Activated CD4-positive, alpha-beta T cell treated with anti-CD3 and anti-CD28 coated beads for 36 hours (primary cell): ENCODE measurements at regions of chr14 and their contacts with region 1.

Region 1: DNA sequence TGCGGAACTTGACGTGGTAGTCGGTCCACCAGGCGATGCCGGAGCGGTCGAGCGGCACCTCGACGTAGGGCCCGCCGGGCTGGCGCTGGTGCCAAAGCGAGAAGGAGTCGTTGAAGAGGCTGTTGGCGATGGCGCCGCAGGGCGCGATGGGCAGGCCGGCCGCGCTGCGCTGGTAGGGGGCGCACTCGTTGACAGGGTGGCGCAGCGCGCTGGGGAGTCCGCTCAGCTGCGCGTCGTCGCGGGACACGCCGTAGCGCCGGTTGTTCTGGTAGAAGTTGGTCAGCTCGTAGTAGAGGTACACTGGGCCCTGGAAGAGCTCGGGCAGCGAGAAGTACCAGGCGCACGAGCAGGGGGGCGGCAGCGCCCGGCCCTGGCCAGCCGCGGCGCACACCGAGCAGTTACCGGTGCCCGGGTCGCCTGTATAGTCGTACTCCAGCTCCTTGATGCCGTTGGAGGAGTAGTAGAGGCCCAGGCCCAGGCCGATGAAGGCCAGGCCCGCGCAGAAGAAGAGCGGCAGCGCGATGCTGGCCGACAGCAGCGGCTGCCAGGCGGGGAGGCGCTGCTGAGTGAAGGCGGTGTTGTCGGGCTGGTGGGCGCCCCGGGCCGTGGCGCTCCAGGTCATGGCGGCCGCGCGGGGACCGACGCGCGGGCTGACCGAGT is 482 bp downstream of the TMEM30B start:
- DNase-seq: peak; percentile 88
- ATAC-seq: peak; percentile 90
- H3K4me3 Mint-ChIP-seq: peak overlapping the region; percentile 82
- H3K27ac Mint-ChIP-seq: peak overlapping the region; percentile 87
- H3K4me1 Mint-ChIP-seq: peaks cover 28% of the 10 kb centered on the region
- H3K27me3 Mint-ChIP-seq: peaks cover 8% of the 10 kb centered on the region

Region 2: GRCh38 chr14:60867503-60868172 is 413.0 kb before region 1 on chr14:
- CTCF ChIA-PET with region 1: no interaction called
- POLR2A ChIA-PET with region 1: no interaction called
- intact Hi-C with region 1: no loop called
- DNase-seq: no peak
- ATAC-seq: peak; percentile 95
- H3K4me3 Mint-ChIP-seq: no peak overlapping the region
- H3K27ac Mint-ChIP-seq: no peak overlapping the region
- H3K4me1 Mint-ChIP-seq: peaks cover 11% of the 10 kb centered on the region
- H3K27me3 Mint-ChIP-seq: no peaks in the 10 kb centered on the region

Region 3: GRCh38 chr14:61246721-61247120 is 33.9 kb before region 1 on chr14:
- CTCF ChIA-PET with region 1: no interaction called
- POLR2A ChIA-PET with region 1: no interaction called
- intact Hi-C with region 1: no loop called
- DNase-seq: no peak
- ATAC-seq: no peak
- H3K4me3 Mint-ChIP-seq: no peak overlapping the region
- H3K27ac Mint-ChIP-seq: no peak overlapping the region
- H3K4me1 Mint-ChIP-seq: peaks cover 2% of the 10 kb centered on the region
- H3K27me3 Mint-ChIP-seq: peaks cover 13% of the 10 kb centered on the region

Region 4: GRCh38 chr14:61262082-61262481 is 18.6 kb before region 1 on chr14:
- CTCF ChIA-PET with region 1: interaction called, 20 read pairs
- POLR2A ChIA-PET with region 1: no interaction called
- intact Hi-C with region 1: no loop called
- DNase-seq: no peak
- ATAC-seq: no peak
- H3K4me3 Mint-ChIP-seq: no peak overlapping the region
- H3K27ac Mint-ChIP-seq: no peak overlapping the region
- H3K4me1 Mint-ChIP-seq: no peaks in the 10 kb centered on the region
- H3K27me3 Mint-ChIP-seq: peaks cover 24% of the 10 kb centered on the region

Region 5: GRCh38 chr14:61269321-61270083 is 11.2 kb before region 1 on chr14:
- CTCF ChIA-PET with region 1: interaction called, 20 read pairs
- POLR2A ChIA-PET with region 1: no interaction called
- intact Hi-C with region 1: no loop called
- DNase-seq: peak; percentile 85
- ATAC-seq: peak; percentile 95
- H3K4me3 Mint-ChIP-seq: peak overlapping the region; percentile 48
- H3K27ac Mint-ChIP-seq: no peak overlapping the region
- H3K4me1 Mint-ChIP-seq: peaks cover 2% of the 10 kb centered on the region
- H3K27me3 Mint-ChIP-seq: peaks cover 30% of the 10 kb centered on the region

Region 6: DNA sequence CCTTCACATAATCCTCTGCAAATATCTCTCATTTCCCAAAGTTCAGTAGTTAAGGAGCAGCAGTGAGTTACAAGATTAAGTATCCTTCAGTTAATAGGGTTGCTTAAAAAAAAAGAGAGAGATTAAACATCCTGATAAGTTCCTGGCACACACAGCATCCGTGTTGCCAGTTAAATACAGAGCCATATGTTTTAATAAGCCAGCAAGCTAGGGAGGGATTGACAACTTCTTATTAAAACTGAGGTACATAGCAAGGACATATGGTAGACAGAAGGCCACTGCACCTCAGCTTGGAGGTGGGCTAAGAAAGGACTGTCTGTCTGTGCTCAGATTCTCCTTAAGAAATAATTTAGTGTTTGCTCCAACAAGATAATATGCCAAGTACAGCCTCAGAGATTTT is 10.0 kb after region 1 on chr14:
- CTCF ChIA-PET with region 1: interaction called, 15 read pairs
- POLR2A ChIA-PET with region 1: no interaction called
- intact Hi-C with region 1: no loop called
- DNase-seq: no peak
- ATAC-seq: no peak
- H3K4me3 Mint-ChIP-seq: no peak overlapping the region
- H3K27ac Mint-ChIP-seq: no peak overlapping the region
- H3K4me1 Mint-ChIP-seq: peaks cover 2% of the 10 kb centered on the region
- H3K27me3 Mint-ChIP-seq: no peaks in the 10 kb centered on the region

Region 7: GRCh38 chr14:61296719-61297502 is 16.3 kb after region 1 on chr14:
- CTCF ChIA-PET with region 1: interaction called, 10 read pairs
- POLR2A ChIA-PET with region 1: no interaction called
- intact Hi-C with region 1: no loop called
- DNase-seq: no peak
- ATAC-seq: peak; percentile 67
- H3K4me3 Mint-ChIP-seq: no peak overlapping the region
- H3K27ac Mint-ChIP-seq: peak overlapping the region; percentile 29
- H3K4me1 Mint-ChIP-seq: peaks cover 54% of the 10 kb centered on the region
- H3K27me3 Mint-ChIP-seq: no peaks in the 10 kb centered on the region

Region 8: DNA sequence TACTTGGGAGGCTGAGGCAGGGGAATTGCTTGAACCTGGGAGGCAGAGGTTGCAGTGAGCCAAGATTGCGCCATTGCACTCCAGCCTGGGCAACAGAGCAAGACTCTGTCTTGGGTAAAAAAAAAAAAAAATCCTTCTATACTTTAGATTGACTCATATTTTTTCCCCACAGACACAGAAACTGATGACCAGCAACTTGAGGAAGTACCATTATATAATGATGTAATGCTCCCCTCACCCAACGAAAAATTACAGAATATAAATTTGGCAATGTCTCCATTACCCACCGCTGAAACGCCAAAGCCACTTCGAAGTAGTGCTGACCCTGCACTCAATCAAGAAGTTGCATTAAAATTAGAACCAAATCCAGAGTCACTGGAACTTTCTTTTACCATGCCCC is 457.3 kb after region 1 on chr14:
- CTCF ChIA-PET with region 1: interaction called, 4 read pairs
- POLR2A ChIA-PET with region 1: interaction called, 14 read pairs
- intact Hi-C with region 1: no loop called
- DNase-seq: no peak
- ATAC-seq: no peak
- H3K4me3 Mint-ChIP-seq: no peak overlapping the region
- H3K27ac Mint-ChIP-seq: peak overlapping the region; percentile 34
- H3K4me1 Mint-ChIP-seq: peaks cover 12% of the 10 kb centered on the region
- H3K27me3 Mint-ChIP-seq: no peaks in the 10 kb centered on the region